HCT116 (cell line): ENCODE measurements at regions of chr7 and their contacts with region 1.

Region 1: GRCh38 chr7:93902777-93903423 is 3.5 kb upstream of the GNGT1 start:
- DNase-seq: peak; percentile 32
- ATAC-seq: peak; percentile 83
- H3K4me3 ChIP-seq: no peak overlapping the region
- H3K27ac ChIP-seq: no peak overlapping the region
- H3K4me1 ChIP-seq: no peaks in the 10 kb centered on the region
- H3K27me3 ChIP-seq: no peaks in the 10 kb centered on the region; the same call in 1 of the 2 replicates
- CTCF ChIP-seq: peak; percentile 33 to 90 (median 81); a peak in 5 of 6 replicates
- POLR2A ChIP-seq: no peak
- RAD21 ChIP-seq: peak; percentile 66

Region 2: DNA sequence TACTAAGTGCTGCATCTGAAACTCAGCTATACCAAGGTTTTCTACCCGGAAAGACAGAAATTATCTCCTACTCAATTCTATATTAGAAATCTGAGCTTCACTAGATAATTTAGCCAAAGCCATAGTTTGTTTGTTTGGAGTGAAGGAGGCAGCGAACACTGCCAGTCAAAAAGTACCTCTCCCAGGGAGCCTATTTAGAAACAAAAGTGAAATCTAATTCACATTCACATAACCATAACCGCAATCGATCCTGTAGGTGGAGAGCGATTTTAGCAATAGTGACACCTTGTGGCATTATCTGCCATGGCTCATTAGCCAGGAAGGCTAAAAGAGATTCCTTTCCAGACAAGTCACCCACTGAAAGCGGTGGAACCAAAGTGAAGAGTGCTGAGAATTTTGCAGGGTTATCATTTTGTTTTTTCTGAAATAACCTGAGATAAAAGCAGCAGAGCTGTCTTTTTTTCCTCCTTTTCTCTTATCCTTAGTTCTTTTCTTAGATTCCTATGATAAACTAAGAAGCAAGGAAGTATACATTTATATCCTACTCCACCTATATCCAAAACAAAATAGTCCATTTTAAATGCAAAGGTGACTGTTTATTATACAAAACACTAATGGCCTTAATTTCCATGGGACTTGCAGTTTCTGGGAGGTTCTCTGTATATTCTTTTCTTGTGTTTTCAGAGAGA is 184.9 kb after region 1 on chr7:
- CTCF ChIA-PET with region 1: interaction called, 11 read pairs
- POLR2A ChIA-PET with region 1: no interaction called
- RAD21 ChIA-PET with region 1: interaction called in 1 of 2 experiments, 4 read pairs
- intact Hi-C with region 1: loop called (anchors 2 kb)
- DNase-seq: peak; percentile 54
- ATAC-seq: peak; percentile 93
- H3K4me3 ChIP-seq: peak overlapping the region in 1 of 2 experiments; percentile 43; a peak in 1 of 4 replicates
- H3K27ac ChIP-seq: no peak overlapping the region
- H3K4me1 ChIP-seq: peaks cover 0 to 3% of the 10 kb centered on the region in 2 experiments; a peak in 1 of 4 replicates
- H3K27me3 ChIP-seq: peaks cover 26% of the 10 kb centered on the region; the same call in 1 of the 2 replicates
- CTCF ChIP-seq: peak; percentile 80 to 88 (median 82)
- POLR2A ChIP-seq: no peak
- RAD21 ChIP-seq: peak; percentile 75

Region 3: DNA sequence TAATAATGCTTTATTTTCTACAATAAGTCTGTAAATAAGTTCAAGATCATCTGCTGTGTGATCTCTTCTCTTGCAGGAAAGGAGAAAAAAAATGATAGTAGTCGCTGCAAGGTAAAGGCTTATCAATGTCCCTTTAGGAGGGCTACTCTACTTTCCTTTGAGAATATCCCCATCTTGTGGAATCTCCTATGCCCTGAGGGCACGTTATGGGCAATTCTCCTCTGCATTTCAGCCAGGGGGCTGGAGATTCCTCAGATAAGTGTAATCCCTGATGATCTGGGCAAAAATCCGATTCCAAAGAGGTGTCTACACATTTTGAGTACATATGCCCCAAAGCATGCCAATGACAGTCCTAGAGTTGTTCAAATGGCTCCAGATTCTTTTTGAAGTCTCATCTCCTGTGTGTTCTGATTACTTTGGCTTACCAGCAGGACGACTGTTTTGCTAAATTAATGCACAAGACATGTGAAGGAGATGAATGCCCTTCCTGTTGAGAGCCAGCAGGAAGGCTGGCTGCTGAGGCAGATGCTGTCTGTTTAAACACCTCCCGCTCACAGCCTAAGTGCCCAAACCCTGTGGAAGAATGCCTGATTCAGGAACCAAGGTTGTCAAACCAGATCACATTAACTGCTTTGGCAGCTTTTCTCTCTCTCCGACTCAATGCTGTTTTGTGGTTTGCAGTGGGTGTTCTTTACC is 320.6 kb after region 1 on chr7:
- CTCF ChIA-PET with region 1: no interaction called
- POLR2A ChIA-PET with region 1: no interaction called
- RAD21 ChIA-PET with region 1: no interaction called
- intact Hi-C with region 1: loop called (anchors 5 kb)
- DNase-seq: peak; percentile 41
- ATAC-seq: peak; percentile 80
- H3K4me3 ChIP-seq: 0 out of 4 replicates have a peak overlapping the region, but pooled peaks of 1 of the 2 experiments have one; percentile 1
- H3K27ac ChIP-seq: no peak overlapping the region
- H3K4me1 ChIP-seq: peaks cover 0 to 9% of the 10 kb centered on the region in 2 experiments; a peak in 1 of 4 replicates
- H3K27me3 ChIP-seq: no peaks in the 10 kb centered on the region
- CTCF ChIP-seq: peak; percentile 35 to 52 (median 50); a peak in 4 of 6 replicates
- POLR2A ChIP-seq: no peak
- RAD21 ChIP-seq: peak; percentile 65

Region 4: GRCh38 chr7:94276795-94277194 is 373.9 kb after region 1 on chr7:
- CTCF ChIA-PET with region 1: no interaction called
- POLR2A ChIA-PET with region 1: no interaction called
- RAD21 ChIA-PET with region 1: interaction called in 1 of 2 experiments, 4 read pairs
- intact Hi-C with region 1: loop called (anchors 2 kb)
- DNase-seq: no peak
- ATAC-seq: peak; percentile 81
- H3K4me3 ChIP-seq: no peak overlapping the region
- H3K27ac ChIP-seq: no peak overlapping the region
- H3K4me1 ChIP-seq: no peaks in the 10 kb centered on the region
- H3K27me3 ChIP-seq: 0 out of 2 replicates have a peak, but pooled peaks cover 5% of the 10 kb centered on the region
- CTCF ChIP-seq: peak; percentile 17 to 53 (median 46); a peak in 3 of 6 replicates
- POLR2A ChIP-seq: no peak
- RAD21 ChIP-seq: peak; percentile 66